AG04450 (cell line): ENCODE measurements at regions of chr9 and their contacts with region 1.

Region 1: DNA sequence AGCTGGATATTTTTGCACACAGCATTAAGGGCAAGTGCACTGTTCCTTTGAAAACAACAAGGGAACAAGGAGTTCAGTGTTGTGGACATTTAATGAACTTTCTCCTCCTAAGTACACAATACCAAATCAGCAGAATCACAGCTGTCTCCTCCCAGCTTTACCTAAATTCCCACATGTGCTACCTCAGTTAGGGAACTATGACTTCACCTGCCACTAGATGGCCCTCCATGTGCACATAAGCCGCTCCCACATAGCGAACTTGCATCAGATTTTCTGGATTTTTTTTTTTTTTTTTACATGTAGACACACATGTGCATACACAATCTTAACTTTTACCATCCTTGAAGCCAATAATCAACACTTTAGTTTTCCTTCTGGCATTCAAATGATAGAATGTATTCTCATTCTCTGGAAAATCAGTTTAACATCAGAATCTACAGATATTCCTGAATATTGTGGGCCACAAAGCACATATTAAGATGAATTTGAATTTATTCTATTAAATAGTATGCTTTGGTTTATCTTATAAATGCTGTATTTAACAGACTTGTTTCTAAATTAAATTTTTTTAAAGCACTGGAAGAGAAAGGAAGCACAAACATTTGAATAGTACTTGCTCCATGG is 123.6 kb downstream of the PALM2AKAP2 start:
- DNase-seq: no peak
- H3K4me3 ChIP-seq: no peak overlapping the region
- H3K27ac ChIP-seq: no peak overlapping the region
- H3K27me3 ChIP-seq: no peaks in the 10 kb centered on the region
- CTCF ChIP-seq: peak; percentile 88

Region 2: GRCh38 chr9:109887079-109887478 is 16.5 kb before region 1 on chr9:
- CTCF ChIA-PET with region 1: interaction called, 19 read pairs
- POLR2A ChIA-PET with region 1: no interaction called
- DNase-seq: no peak
- H3K4me3 ChIP-seq: no peak overlapping the region
- H3K27ac ChIP-seq: no peak overlapping the region
- H3K27me3 ChIP-seq: no peaks in the 10 kb centered on the region
- CTCF ChIP-seq: no peak

Region 3: GRCh38 chr9:110050925-110051355 is 147.3 kb after region 1 on chr9:
- CTCF ChIA-PET with region 1: interaction called, 12 read pairs
- POLR2A ChIA-PET with region 1: interaction called, 9 read pairs
- DNase-seq: peak; percentile 80
- H3K4me3 ChIP-seq: peak overlapping the region; percentile 93
- H3K27ac ChIP-seq: peak overlapping the region; percentile 85
- H3K27me3 ChIP-seq: no peaks in the 10 kb centered on the region
- CTCF ChIP-seq: no peak

Region 4: DNA sequence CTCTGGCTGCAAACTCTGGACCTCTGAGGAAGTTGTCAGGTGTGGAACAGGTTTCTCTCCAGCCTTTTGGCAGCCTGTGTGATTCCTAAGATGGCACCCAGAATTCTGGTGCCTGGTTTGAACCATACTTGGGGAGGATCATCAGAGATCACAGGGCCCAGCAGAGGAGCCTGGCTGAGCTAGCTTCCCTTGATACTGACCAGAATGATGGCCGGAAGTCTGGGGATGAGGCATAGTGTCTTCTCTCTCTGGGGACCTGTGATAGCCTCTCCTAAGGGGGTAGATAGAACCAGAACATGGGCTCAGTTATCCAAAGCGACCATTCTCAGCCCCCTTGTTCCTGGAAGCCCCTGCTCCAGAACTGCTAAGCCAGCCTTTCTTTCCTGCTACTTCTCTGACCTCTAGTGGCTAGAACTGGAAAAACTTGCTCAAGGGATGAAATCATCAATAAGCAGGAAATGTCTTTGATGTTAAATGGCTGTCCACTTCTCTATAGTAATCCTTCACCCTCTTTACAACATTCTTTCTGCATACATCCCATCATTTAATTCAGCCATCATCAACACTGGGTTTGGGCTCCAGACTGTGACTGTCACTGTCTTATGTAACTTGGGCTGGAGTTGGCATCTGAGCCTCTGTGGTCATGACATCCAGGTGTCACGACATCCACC is 249.2 kb after region 1 on chr9:
- CTCF ChIA-PET with region 1: interaction called, 54 read pairs
- POLR2A ChIA-PET with region 1: no interaction called
- DNase-seq: no peak
- H3K4me3 ChIP-seq: no peak overlapping the region
- H3K27ac ChIP-seq: no peak overlapping the region
- H3K27me3 ChIP-seq: no peaks in the 10 kb centered on the region
- CTCF ChIP-seq: peak; percentile 83

Region 5: GRCh38 chr9:110217656-110218099 is 314.1 kb after region 1 on chr9:
- CTCF ChIA-PET with region 1: interaction called, 10 read pairs
- POLR2A ChIA-PET with region 1: no interaction called
- DNase-seq: peak; percentile 8
- H3K4me3 ChIP-seq: no peak overlapping the region
- H3K27ac ChIP-seq: no peak overlapping the region
- H3K27me3 ChIP-seq: peaks cover 7% of the 10 kb centered on the region
- CTCF ChIP-seq: peak; percentile 69